ENCODE measurements at regions of chr14 and their contacts with region 1.

Region 1: DNA sequence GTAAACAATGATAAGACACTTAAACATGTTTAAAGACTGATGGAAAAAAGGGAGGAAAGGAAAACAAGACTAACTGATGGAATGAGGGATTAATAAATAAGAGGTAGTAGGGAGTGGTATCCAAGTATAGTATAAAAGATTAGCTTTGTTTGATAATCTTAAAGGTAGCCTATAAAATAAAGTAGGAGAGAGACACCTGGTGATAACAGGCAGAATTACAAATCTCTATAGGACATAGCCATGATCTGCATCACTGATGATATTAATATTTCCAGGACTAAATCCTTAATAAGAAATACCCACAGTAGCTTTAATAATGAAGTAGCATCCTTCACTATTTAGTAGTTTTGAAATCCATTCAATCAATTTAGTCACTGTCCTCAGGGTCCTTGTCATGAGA is 30.4 kb downstream of the DLGAP5 start:
- DNase-seq: peak; percentile 34
- H3K4me3 ChIP-seq: no peak overlapping the region
- H3K27ac ChIP-seq: no peak overlapping the region
- H3K4me1 ChIP-seq: no peaks in the 10 kb centered on the region
- CTCF ChIP-seq: peak; percentile 73

Region 2: DNA sequence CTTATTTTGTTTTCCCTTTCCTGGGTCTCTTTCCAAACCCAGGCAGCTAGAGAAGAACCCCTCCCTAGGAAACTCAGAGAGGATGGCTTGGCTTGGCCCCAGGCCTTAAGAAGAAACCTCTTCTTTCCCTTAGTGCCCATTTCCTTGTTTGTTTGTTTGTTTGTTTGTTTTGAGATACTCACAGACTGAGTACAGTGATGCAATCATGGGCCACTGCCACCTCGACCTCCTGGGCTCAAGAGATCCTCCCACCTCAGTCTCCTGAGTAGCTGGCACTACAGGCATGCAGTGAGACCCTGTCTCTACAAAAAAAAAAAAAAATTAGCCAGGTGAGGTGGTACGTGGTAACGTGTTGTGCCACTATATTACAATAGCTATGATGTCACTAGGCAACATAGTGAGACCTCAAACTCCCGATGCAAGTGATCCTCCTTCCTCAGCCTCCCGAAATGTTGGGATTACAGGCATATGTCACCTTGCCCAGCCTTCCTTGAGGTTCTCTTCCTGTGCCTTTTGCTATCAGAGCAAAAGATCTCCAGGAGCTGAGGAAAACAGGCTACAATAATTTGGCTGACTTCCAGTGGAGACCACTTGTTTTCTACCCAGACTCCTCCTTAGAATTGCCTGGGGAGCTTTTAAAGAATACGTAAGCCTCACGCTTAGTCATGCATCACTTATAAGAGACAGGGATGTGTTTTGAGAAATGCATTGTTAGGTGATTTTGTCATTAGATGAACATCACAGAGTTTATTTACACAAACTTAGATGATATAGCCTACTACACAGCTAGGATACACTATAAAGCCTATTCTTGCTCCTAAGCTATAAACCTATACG is 66.5 kb before region 1 on chr14:
- CTCF ChIA-PET with region 1: interaction called, 3 read pairs
- POLR2A ChIA-PET with region 1: interaction called, 5 read pairs
- intact Hi-C with region 1: loop called (anchors 1 kb)
- DNase-seq: no peak
- H3K4me3 ChIP-seq: no peak overlapping the region
- H3K27ac ChIP-seq: no peak overlapping the region
- H3K4me1 ChIP-seq: peaks cover 25% of the 10 kb centered on the region
- CTCF ChIP-seq: no peak

Region 3: GRCh38 chr14:55271566-55272414 is 110.8 kb after region 1 on chr14:
- CTCF ChIA-PET with region 1: no interaction called
- POLR2A ChIA-PET with region 1: no interaction called
- intact Hi-C with region 1: no loop called
- DNase-seq: peak; percentile 77
- H3K4me3 ChIP-seq: peak overlapping the region; percentile 93
- H3K27ac ChIP-seq: peak overlapping the region; percentile 58
- H3K4me1 ChIP-seq: peaks cover 45% of the 10 kb centered on the region
- CTCF ChIP-seq: no peak

Region 4: GRCh38 chr14:55589171-55589570 is 428.2 kb after region 1 on chr14:
- CTCF ChIA-PET with region 1: no interaction called
- POLR2A ChIA-PET with region 1: no interaction called
- intact Hi-C with region 1: no loop called
- DNase-seq: no peak
- H3K4me3 ChIP-seq: no peak overlapping the region
- H3K27ac ChIP-seq: no peak overlapping the region
- H3K4me1 ChIP-seq: peaks cover 13% of the 10 kb centered on the region
- CTCF ChIP-seq: no peak